Posterior cingulate gyrus (tissue), 11 donors: ENCODE measurements at regions of chr5 and their contacts with region 1.

Region 1: DNA sequence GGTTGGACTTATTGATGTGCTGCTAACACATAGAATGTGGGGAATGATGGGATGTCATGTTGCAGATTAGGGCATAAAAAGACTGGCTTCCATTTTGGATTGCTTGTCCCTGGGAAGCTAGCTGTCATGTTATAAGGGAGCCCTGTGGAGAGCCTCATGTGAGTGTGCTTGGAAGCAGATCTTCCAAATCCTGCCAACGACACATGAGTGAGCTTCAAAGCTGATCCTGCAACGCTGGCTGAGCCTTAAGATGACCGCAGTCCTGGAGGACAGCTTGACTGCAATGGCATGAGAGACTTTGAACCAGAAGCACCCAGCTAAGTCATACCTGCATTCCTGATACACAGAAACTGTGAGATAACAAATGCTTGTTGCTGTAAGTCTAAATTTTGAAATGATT is 63.6 kb downstream of the NRG2 start:
- DNase-seq: no peak

Region 2: GRCh38 chr5:140042643-140043500 is 63.4 kb after region 1 on chr5 and contains the start of gene NRG2:
- intact Hi-C with region 1: loop called (anchors 2 kb)
- DNase-seq: peak; percentile 69 to 97 (median 76)